Endothelial cell of umbilical vein (primary cell): ENCODE measurements at regions of chr2 and their contacts with region 1.

Region 1: GRCh38 chr2:148338541-148338940 is 306.0 kb upstream of the EPC2 start:
- DNase-seq: peak; percentile 83
- H3K4me3 ChIP-seq: no peak overlapping the region
- H3K27ac ChIP-seq: peak overlapping the region; percentile 70
- H3K4me1 ChIP-seq: peaks cover 12% of the 10 kb centered on the region
- H3K27me3 ChIP-seq: no peaks in the 10 kb centered on the region
- CTCF ChIP-seq: no peak
- POLR2A ChIP-seq: no peak

Region 2: GRCh38 chr2:146602383-146602782 is 1736.2 kb before region 1 on chr2:
- CTCF ChIA-PET with region 1: no interaction called
- POLR2A ChIA-PET with region 1: no interaction called
- dilution Hi-C with region 1: no loop called
- intact Hi-C with region 1: loop called (anchors 5 kb)
- DNase-seq: no peak
- H3K4me3 ChIP-seq: no peak overlapping the region
- H3K27ac ChIP-seq: no peak overlapping the region
- H3K4me1 ChIP-seq: no peaks in the 10 kb centered on the region
- H3K27me3 ChIP-seq: no peaks in the 10 kb centered on the region
- CTCF ChIP-seq: no peak
- POLR2A ChIP-seq: no peak